Ascending aorta (tissue), 2 donors: ENCODE measurements at regions of chr12 and their contacts with region 1.

Region 1: GRCh38 chr12:65536876-65537661 is 258.6 kb downstream of the MSRB3 start:
- DNase-seq: peak; percentile 51 to 92
- H3K4me3 ChIP-seq: no peak overlapping the region
- H3K27ac ChIP-seq: peak overlapping the region; percentile 71 to 81
- H3K4me1 ChIP-seq: peaks cover 3 to 10% of the 10 kb centered on the region in 2 donors
- H3K27me3 ChIP-seq: no peaks in the 10 kb centered on the region
- CTCF ChIP-seq: no peak

Region 2: DNA sequence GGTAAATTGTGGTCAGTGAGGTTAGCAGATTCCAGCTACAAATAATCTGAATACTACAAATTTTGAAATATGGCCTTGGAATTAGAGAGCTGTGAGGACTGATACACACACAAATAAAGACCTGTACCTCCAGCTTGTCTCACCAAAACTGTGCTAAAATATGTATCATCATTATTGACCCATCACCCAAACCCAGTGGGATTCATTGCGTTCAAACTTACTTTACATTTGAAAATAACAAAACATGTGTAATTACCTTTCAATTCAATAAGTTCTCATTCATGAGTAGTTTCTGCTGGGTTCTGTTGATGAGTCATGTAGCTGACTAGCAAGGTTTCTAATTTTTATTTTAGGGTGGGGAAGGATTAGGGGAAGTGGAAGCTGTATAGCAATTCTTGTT is 87.7 kb before region 1 on chr12:
- intact Hi-C with region 1: no loop called
- DNase-seq: no peak
- H3K4me3 ChIP-seq: no peak overlapping the region
- H3K27ac ChIP-seq: no peak overlapping the region
- H3K4me1 ChIP-seq: no peaks in the 10 kb centered on the region
- H3K27me3 ChIP-seq: no peaks in the 10 kb centered on the region
- CTCF ChIP-seq: no peak

Region 3: GRCh38 chr12:65631621-65632111 is 94.6 kb after region 1 on chr12:
- intact Hi-C with region 1: loop called (anchors 5 kb)
- DNase-seq: peak in 1 of 2 donors; percentile 68
- H3K4me3 ChIP-seq: no peak overlapping the region
- H3K27ac ChIP-seq: peak overlapping the region; percentile 14 to 26
- H3K4me1 ChIP-seq: peaks cover 0 to 8% of the 10 kb centered on the region in 2 donors
- H3K27me3 ChIP-seq: no peaks in the 10 kb centered on the region
- CTCF ChIP-seq: no peak